Transverse colon (tissue), 4 donors: ENCODE measurements at regions of chr18 and their contacts with region 1.

Region 1: GRCh38 chr18:55415258-55415871 is 172.6 kb downstream of the TCF4 start:
- DNase-seq: peak; percentile 82
- H3K4me3 ChIP-seq: no peak overlapping the region
- H3K27ac ChIP-seq: no peak overlapping the region
- H3K4me1 ChIP-seq: peaks cover 0 to 19% (median 0%) of the 10 kb centered on the region in 4 donors
- H3K27me3 ChIP-seq: no peaks in the 10 kb centered on the region
- CTCF ChIP-seq: peak; percentile 77 to 89 (median 87)
- EP300 ChIP-seq: no peak
- POLR2A ChIP-seq: no peak

Region 2: DNA sequence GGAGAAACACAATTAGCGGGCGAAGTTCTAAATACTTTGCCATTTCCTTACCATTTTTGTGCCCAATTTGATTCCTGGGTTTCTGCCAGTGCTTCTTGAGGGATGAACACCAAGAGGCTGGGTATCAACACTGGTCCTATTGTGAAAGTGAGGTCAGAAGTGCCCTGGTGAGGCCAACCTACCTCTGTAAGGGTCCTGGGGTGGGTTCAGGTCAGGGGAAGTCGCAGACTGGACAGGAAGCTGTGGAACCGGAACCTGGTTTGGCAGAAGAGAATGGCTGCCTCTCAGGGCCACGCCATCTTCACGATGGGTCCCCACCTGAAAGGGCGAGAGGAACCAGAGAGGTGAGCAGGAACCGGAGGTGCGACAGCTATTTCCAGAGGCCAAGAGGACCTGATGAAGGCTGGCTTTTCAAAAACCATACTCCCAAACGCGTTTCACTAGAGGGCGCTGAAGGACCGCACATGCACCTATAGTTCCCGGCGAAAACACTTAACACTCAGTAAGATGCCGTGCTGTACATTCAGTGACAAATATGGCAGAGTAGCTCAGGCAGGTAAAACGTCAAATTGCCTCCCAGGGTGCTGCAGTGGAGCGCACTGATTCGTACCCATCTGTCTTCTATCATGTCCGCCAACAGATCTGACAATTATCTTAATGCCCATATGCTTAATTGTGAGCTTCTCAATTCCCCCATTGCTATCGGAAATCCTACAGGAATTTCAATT is 180.8 kb before region 1 on chr18:
- in situ Hi-C with region 1: loop called in 2 of 4 experiments (anchors 25 kb)
- intact Hi-C with region 1: loop called (anchors 10 kb)
- DNase-seq: peak; percentile 78
- H3K4me3 ChIP-seq: no peak overlapping the region
- H3K27ac ChIP-seq: peak overlapping the region; percentile 1 to 15 (median 2)
- H3K4me1 ChIP-seq: peaks cover 0 to 5% (median 0%) of the 10 kb centered on the region in 4 donors
- H3K27me3 ChIP-seq: no peaks in the 10 kb centered on the region
- CTCF ChIP-seq: peak; percentile 66 to 81 (median 70)
- EP300 ChIP-seq: no peak
- POLR2A ChIP-seq: no peak

Region 3: GRCh38 chr18:55243857-55244256 is 171.5 kb before region 1 on chr18:
- in situ Hi-C with region 1: loop called in 3 of 4 experiments (anchors 10 to 25 kb)
- intact Hi-C with region 1: loop called (anchors 10 kb)
- DNase-seq: no peak
- H3K4me3 ChIP-seq: no peak overlapping the region
- H3K27ac ChIP-seq: peak overlapping the region; percentile 62 to 72 (median 72)
- H3K4me1 ChIP-seq: peaks cover 5 to 41% (median 12%) of the 10 kb centered on the region in 4 donors
- H3K27me3 ChIP-seq: no peaks in the 10 kb centered on the region
- CTCF ChIP-seq: no peak
- EP300 ChIP-seq: no peak
- POLR2A ChIP-seq: no peak

Region 4: GRCh38 chr18:55781481-55781957 is 366.2 kb after region 1 on chr18:
- in situ Hi-C with region 1: loop called in 3 of 4 experiments (anchors 25 kb)
- intact Hi-C with region 1: loop called (anchors 5 kb)
- DNase-seq: peak; percentile 10
- H3K4me3 ChIP-seq: no peak overlapping the region
- H3K27ac ChIP-seq: no peak overlapping the region
- H3K4me1 ChIP-seq: peaks cover 0 to 7% (median 0%) of the 10 kb centered on the region in 4 donors
- H3K27me3 ChIP-seq: peaks cover 12% of the 10 kb centered on the region
- CTCF ChIP-seq: peak in 4 of 5 experiments; percentile 29 to 43 (median 31)
- EP300 ChIP-seq: no peak
- POLR2A ChIP-seq: no peak

Region 5: GRCh38 chr18:56563568-56563967 is 1148.2 kb after region 1 on chr18:
- in situ Hi-C with region 1: loop called in 1 of 4 experiments (anchors 25 kb)
- intact Hi-C with region 1: no loop called
- DNase-seq: no peak
- H3K4me3 ChIP-seq: no peak overlapping the region
- H3K27ac ChIP-seq: no peak overlapping the region
- H3K4me1 ChIP-seq: no peaks in the 10 kb centered on the region
- H3K27me3 ChIP-seq: no peaks in the 10 kb centered on the region
- CTCF ChIP-seq: no peak
- EP300 ChIP-seq: no peak
- POLR2A ChIP-seq: no peak

Region 6: DNA sequence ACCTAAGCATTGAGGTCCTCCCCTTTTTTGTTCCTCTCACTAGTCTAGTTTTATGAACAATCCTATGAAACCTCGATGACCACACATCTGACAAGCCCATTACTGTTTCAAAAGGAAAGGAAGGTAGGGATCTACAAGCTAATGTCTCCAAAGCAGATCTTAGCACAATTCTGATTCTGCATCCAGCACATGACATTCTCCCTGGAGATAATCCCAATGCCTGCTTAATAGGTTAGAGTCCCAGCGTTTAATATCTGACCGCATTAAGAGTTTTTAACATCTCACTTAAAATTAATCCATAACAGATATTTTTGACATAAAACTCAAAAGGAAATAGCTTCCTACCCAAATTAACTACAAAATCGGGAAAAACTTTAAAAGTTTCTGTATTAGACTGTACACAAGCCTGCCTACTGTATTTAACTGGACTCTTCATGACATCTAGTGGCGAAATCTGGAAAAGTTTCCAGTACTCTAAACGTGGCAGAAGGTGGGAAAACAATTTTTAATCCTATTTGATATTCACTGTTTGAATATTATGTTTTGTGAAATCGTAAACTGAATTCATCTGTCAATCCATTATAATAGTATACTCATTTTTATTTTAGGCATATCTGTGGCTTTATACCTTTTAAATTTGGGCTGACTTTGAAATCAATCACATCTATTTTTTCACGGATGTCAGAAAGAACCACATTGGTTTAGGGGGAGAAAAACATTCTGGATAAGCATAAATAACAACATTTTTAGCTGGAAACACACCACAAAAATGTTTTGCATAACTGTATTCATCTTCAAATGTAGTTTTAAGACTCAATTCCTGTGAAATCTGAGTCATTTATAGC is 1160.7 kb after region 1 on chr18:
- in situ Hi-C with region 1: loop called in 3 of 4 experiments (anchors 10 to 25 kb)
- intact Hi-C with region 1: no loop called
- DNase-seq: no peak
- H3K4me3 ChIP-seq: no peak overlapping the region
- H3K27ac ChIP-seq: peak overlapping the region in 1 of 4 donors; percentile 51
- H3K4me1 ChIP-seq: peaks cover 0 to 12% (median 0%) of the 10 kb centered on the region in 4 donors
- H3K27me3 ChIP-seq: no peaks in the 10 kb centered on the region
- CTCF ChIP-seq: peak; percentile 55 to 77 (median 60)
- EP300 ChIP-seq: no peak
- POLR2A ChIP-seq: no peak